ENCODE measurements at regions of chr1 and their contacts with region 1.

Region 1: DNA sequence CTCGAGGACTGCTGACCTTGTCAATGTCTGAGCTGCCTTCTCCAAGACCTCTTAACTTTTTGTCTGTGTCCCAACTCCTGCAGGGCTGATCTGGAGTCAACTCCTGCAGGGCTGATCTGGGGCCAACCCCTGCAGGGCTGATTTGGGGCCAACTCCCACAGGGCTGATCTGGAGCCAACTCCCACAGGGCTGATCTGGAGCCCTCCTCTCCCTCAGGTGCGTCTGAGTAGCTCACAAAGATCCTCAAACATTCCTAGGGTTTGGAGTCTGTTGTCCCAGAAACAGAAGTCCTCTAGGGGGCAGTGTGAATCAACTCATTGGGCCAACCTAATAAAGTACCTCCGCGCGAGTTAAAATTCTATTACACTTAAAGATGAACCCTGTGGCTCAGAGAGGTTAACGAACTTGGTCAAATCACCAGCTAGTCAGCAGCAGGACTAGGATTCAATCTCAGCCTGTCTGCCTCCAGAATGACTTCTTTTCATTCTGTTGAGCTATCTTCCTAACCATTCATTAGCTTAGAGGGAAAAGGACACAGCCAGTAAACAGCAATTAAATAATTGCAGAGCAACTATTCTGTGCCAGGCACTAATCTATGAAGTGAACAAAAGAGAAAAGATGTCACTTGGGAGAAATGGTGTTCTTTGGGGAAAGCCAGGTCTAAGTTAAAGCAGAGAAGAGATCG is 17.2 kb upstream of the RLF start:
- DNase-seq: peak; percentile 3 to 84 (median 40)
- ATAC-seq: peak; percentile 85
- H3K4me3 ChIP-seq: no peak overlapping the region
- H3K4me3 Mint-ChIP-seq: no peak overlapping the region
- H3K27ac ChIP-seq: no peak overlapping the region
- H3K27ac Mint-ChIP-seq: no peak overlapping the region
- H3K4me1 ChIP-seq: peaks cover 4% of the 10 kb centered on the region
- H3K4me1 Mint-ChIP-seq: no peaks in the 10 kb centered on the region
- H3K27me3 ChIP-seq: peaks cover 0 to 6% of the 10 kb centered on the region in 2 experiments
- H3K27me3 Mint-ChIP-seq: peaks cover 24% of the 10 kb centered on the region
- CTCF ChIP-seq: peak; percentile 83

Region 2: GRCh38 chr1:40404670-40405462 is 260.8 kb after region 1 on chr1:
- CTCF ChIA-PET with region 1: interaction called, 4 read pairs
- POLR2A ChIA-PET with region 1: interaction called, 8 read pairs
- intact Hi-C with region 1: loop called (anchors 1 to 2 kb)
- DNase-seq: peak in 7 of 14 experiments; percentile 25 to 86 (median 65)
- ATAC-seq: peak; percentile 81
- H3K4me3 ChIP-seq: no peak overlapping the region
- H3K4me3 Mint-ChIP-seq: peak overlapping the region; percentile 50
- H3K27ac ChIP-seq: peak overlapping the region; percentile 33 to 48
- H3K27ac Mint-ChIP-seq: peak overlapping the region; percentile 86
- H3K4me1 ChIP-seq: peaks cover 47% of the 10 kb centered on the region
- H3K4me1 Mint-ChIP-seq: peaks cover 63% of the 10 kb centered on the region
- H3K27me3 ChIP-seq: no peaks in the 10 kb centered on the region
- H3K27me3 Mint-ChIP-seq: no peaks in the 10 kb centered on the region
- CTCF ChIP-seq: peak; percentile 94

Region 3: DNA sequence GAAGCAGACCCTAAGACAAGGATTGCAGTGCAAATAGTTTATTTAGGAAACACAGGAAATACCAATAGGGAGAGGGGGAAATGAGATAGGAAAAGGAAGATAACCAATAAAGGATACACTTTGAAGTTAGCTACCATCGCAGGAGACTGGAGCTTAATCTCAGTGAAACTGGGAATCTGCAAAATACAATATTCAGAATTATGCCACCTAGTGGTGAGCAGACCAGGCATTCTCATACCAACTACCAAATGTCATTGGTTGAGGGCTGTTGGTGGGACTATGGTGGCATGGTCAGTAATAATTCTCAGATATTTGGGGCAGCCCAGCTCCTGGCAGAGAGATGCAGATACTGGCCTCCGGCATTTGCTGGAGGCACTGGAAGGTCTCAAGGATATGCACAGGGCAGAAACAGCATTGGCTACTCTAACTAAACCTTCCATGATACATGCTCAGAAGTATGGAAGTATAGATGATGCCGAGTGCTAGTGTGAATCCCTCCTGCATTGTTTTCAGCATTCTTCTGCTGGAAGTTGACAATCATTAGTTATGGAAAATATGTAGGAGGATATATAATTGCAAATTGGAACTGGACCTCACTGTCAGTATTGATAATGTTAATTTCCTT is 294.5 kb after region 1 on chr1:
- CTCF ChIA-PET with region 1: interaction called, 3 read pairs
- POLR2A ChIA-PET with region 1: no interaction called
- intact Hi-C with region 1: loop called in 1 of 2 experiments (anchors 2 kb)
- DNase-seq: peak in 4 of 14 experiments; percentile 37 to 63 (median 54)
- ATAC-seq: peak; percentile 44
- H3K4me3 ChIP-seq: no peak overlapping the region
- H3K4me3 Mint-ChIP-seq: no peak overlapping the region
- H3K27ac ChIP-seq: no peak overlapping the region
- H3K27ac Mint-ChIP-seq: no peak overlapping the region
- H3K4me1 ChIP-seq: no peaks in the 10 kb centered on the region
- H3K4me1 Mint-ChIP-seq: no peaks in the 10 kb centered on the region
- H3K27me3 ChIP-seq: no peaks in the 10 kb centered on the region
- H3K27me3 Mint-ChIP-seq: no peaks in the 10 kb centered on the region
- CTCF ChIP-seq: peak; percentile 81

Region 4: GRCh38 chr1:40668769-40669525 is 524.9 kb after region 1 on chr1:
- CTCF ChIA-PET with region 1: no interaction called
- POLR2A ChIA-PET with region 1: no interaction called
- intact Hi-C with region 1: loop called (anchors 5 kb)
- DNase-seq: peak; percentile 72 to 91 (median 82)
- ATAC-seq: peak; percentile 78
- H3K4me3 ChIP-seq: peak overlapping the region; percentile 36
- H3K4me3 Mint-ChIP-seq: peak overlapping the region; percentile 69
- H3K27ac ChIP-seq: no peak overlapping the region
- H3K27ac Mint-ChIP-seq: no peak overlapping the region
- H3K4me1 ChIP-seq: peaks cover 23% of the 10 kb centered on the region
- H3K4me1 Mint-ChIP-seq: peaks cover 20% of the 10 kb centered on the region
- H3K27me3 ChIP-seq: no peaks in the 10 kb centered on the region
- H3K27me3 Mint-ChIP-seq: no peaks in the 10 kb centered on the region
- CTCF ChIP-seq: peak; percentile 94

Region 5: GRCh38 chr1:40849801-40850592 is 706.0 kb after region 1 on chr1:
- CTCF ChIA-PET with region 1: no interaction called
- POLR2A ChIA-PET with region 1: no interaction called
- intact Hi-C with region 1: loop called in 1 of 2 experiments (anchors 5 kb)
- DNase-seq: peak; percentile 59 to 87 (median 72)
- ATAC-seq: peak; percentile 92
- H3K4me3 ChIP-seq: no peak overlapping the region
- H3K4me3 Mint-ChIP-seq: peak overlapping the region; percentile 30
- H3K27ac ChIP-seq: no peak overlapping the region
- H3K27ac Mint-ChIP-seq: no peak overlapping the region
- H3K4me1 ChIP-seq: peaks cover 7% of the 10 kb centered on the region
- H3K4me1 Mint-ChIP-seq: peaks cover 15% of the 10 kb centered on the region
- H3K27me3 ChIP-seq: no peaks in the 10 kb centered on the region
- H3K27me3 Mint-ChIP-seq: no peaks in the 10 kb centered on the region
- CTCF ChIP-seq: peak; percentile 90

Measured in CD4-positive, alpha-beta T cell (primary cell).